MCF 10A (cell line): ENCODE measurements at regions of chr12 and their contacts with region 1.

Region 1: GRCh38 chr12:120317224-120318105 is 10.1 kb downstream of the PLA2G1B start:
- DNase-seq: peak; percentile 100
- H3K4me3 Mint-ChIP-seq: peak overlapping the region; percentile 95
- H3K27ac Mint-ChIP-seq: peak overlapping the region; percentile 97
- H3K4me1 Mint-ChIP-seq: peaks cover 15% of the 10 kb centered on the region
- H3K27me3 Mint-ChIP-seq: no peaks in the 10 kb centered on the region
- CTCF ChIP-seq: peak; percentile 54

Region 2: DNA sequence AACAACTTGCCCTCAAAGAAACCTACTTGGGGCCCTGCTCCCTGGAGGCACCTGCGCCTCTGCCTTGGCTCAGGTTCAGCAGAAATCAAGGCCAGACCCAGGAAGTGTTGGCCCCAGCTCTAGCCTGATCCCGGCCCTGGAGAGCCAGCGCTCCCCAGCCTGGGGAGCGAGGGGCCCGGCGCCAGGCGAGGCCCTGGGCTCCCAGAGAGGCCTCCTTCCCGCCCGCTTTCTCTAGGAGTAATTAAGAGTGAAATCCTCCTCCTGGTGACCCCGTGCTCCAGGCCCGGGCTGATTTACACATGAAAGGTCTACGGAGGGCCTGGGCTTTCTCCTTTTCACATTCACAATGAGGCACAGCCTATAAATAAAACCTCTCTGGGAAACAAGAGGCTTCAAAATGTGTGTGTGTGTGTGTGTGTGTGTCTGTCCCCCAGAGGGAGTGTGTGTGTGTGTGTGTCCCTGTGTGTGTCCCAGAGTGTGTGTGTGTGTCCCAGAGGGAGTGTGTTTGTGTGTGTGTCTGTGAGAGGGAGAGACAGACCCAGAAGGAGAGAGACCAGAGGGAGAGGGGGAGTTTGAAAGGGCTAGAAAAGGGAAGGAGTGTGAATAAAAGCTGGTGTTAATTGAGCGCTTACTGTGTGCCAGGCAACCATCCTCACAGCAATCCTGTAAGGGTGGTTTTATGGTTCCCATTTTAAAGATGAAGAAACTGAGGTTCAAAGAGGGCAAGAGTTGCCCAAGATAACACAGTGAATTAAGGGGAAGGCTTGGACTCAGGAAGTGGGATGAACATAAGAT is 96.6 kb after region 1 on chr12:
- CTCF ChIA-PET with region 1: no interaction called
- POLR2A ChIA-PET with region 1: no interaction called
- intact Hi-C with region 1: no loop called
- DNase-seq: no peak
- H3K4me3 Mint-ChIP-seq: no peak overlapping the region
- H3K27ac Mint-ChIP-seq: no peak overlapping the region
- H3K4me1 Mint-ChIP-seq: no peaks in the 10 kb centered on the region
- H3K27me3 Mint-ChIP-seq: no peaks in the 10 kb centered on the region
- CTCF ChIP-seq: no peak

Region 3: DNA sequence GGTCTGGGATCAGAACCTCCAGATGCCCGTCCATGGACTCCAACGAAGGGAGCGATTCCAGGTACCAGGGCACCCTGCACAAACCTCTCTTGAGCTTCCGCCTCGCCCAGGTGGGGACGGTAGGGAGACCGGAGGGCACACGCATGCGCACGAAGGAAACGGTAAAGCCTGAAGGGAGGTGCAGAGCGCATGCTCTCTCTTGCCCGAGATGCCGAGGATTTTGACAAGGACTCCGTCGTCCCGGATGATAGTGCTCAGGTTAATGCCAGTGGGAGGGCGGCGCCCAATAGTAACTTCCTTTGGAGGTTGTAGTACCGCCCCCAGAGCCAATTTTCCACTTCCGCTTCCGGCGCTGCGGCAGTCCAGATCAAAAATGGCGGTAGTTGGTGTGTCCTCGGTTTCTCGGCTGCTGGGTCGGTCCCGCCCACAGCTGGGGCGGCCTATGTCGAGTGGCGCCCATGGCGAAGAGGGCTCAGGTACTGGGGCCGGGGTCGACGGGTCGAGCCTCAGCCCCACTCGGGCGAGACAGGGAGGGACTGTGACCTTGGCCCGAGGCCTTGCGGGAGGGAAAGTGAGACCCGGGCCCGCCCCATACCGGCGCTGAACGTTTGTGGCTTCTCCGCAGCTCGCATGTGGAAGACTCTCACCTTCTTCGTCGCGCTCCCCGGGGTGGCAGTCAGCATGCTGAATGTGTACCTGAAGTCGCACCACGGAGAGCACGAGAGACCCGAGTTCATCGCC is 120.5 kb after region 1 on chr12 and contains the start of gene COX6A1:
- CTCF ChIA-PET with region 1: interaction called, 3 read pairs
- POLR2A ChIA-PET with region 1: no interaction called
- intact Hi-C with region 1: loop called (anchors 10 kb)
- DNase-seq: peak; percentile 98
- H3K4me3 Mint-ChIP-seq: peak within 1 kb of the TSS; percentile 98
- H3K27ac Mint-ChIP-seq: peak within 1 kb of the TSS; percentile 92
- H3K4me1 Mint-ChIP-seq: peaks cover 6% of the 10 kb centered on the region
- H3K27me3 Mint-ChIP-seq: no peaks in the 10 kb centered on the region
- CTCF ChIP-seq: no peak
- total RNA-seq, gene COX6A1: 475 and 518 TPM in 2 replicates